ENCODE measurements at regions of chr15 and their contacts with region 1.

Region 1: GRCh38 chr15:61974759-61975158 is 85.5 kb downstream of the VPS13C start:
- DNase-seq: no peak
- ATAC-seq: peak in 7 of 8 donors; percentile 43 to 86 (median 80)
- H3K4me3 ChIP-seq: no peak overlapping the region
- H3K27ac ChIP-seq: peak overlapping the region in 6 of 10 donors; percentile 7 to 56 (median 40)
- H3K4me1 ChIP-seq: peaks cover 0 to 21% (median 12%) of the 10 kb centered on the region in 9 donors
- H3K27me3 ChIP-seq: no peaks in the 10 kb centered on the region
- CTCF ChIP-seq: no peak

Region 2: DNA sequence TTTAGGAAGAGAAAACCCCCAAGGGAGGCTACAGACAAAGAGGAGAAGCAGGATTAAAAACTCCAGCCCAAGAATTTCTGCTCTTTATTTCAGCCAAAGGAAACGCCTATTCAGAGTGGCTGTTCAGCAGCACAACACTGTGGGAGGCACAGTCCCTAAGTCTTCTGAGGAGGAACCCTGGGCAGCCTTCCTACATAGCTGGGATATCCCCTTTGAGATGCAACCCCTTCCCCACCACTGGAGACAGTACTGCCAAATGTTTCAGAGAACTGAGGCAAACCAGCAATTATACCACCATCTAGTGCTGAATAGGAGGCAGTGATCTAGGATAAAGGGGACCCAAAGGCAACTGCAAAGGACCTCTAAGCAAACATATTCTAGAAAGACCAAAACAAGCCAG is 82.6 kb before region 1 on chr15:
- intact Hi-C with region 1: no loop called
- DNase-seq: no peak
- ATAC-seq: peak in 1 of 8 donors; percentile 22
- H3K4me3 ChIP-seq: no peak overlapping the region
- H3K27ac ChIP-seq: peak overlapping the region in 1 of 10 donors; percentile 8
- H3K4me1 ChIP-seq: peaks cover 0 to 6% (median 0%) of the 10 kb centered on the region in 9 donors
- H3K27me3 ChIP-seq: no peaks in the 10 kb centered on the region
- CTCF ChIP-seq: no peak

Region 3: GRCh38 chr15:62021991-62022600 is 47.3 kb after region 1 on chr15:
- intact Hi-C with region 1: loop called in 1 of 10 experiments (anchors 10 kb)
- DNase-seq: no peak
- ATAC-seq: no peak
- H3K4me3 ChIP-seq: no peak overlapping the region
- H3K27ac ChIP-seq: no peak overlapping the region
- H3K4me1 ChIP-seq: peaks cover 0 to 17% (median 0%) of the 10 kb centered on the region in 9 donors
- H3K27me3 ChIP-seq: no peaks in the 10 kb centered on the region
- CTCF ChIP-seq: peak in 2 of 9 donors; percentile 9 to 27

Measured in heart right ventricle (tissue), 16 donors.